Right ventricle myocardium superior (tissue), 1 donor: ENCODE measurements at regions of chr12 and their contacts with region 1.

Region 1: DNA sequence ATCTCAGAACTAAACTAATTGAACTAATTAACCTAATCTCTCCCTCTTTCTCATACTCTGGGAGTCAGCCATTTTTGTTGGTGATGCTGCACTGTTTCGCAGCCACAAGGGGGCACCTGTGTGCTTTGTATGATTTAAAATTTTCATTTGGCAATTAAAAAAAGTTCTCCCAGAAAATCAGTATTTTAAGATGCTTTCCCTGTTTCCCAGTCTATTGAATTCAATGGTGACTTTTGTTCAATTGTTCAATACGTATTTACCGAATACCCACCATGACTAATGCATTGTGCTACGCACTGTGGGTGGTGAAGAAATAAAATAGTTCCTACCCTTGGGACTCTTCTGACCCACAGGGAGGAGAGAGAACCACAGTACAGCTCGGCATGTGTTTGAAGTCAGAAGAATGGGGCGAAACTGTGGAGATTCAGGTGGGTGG is 63.7 kb downstream of the ZNF664 start:
- DNase-seq: no peak
- ATAC-seq: peak; percentile 61

Region 2: GRCh38 chr12:124073304-124074035 is 36.8 kb after region 1 on chr12:
- intact Hi-C with region 1: no loop called
- DNase-seq: no peak
- ATAC-seq: no peak

Region 3: GRCh38 chr12:124321040-124321481 is 284.4 kb after region 1 on chr12:
- intact Hi-C with region 1: loop called (anchors 5 kb)
- DNase-seq: peak; percentile 79
- ATAC-seq: peak; percentile 84

Region 4: DNA sequence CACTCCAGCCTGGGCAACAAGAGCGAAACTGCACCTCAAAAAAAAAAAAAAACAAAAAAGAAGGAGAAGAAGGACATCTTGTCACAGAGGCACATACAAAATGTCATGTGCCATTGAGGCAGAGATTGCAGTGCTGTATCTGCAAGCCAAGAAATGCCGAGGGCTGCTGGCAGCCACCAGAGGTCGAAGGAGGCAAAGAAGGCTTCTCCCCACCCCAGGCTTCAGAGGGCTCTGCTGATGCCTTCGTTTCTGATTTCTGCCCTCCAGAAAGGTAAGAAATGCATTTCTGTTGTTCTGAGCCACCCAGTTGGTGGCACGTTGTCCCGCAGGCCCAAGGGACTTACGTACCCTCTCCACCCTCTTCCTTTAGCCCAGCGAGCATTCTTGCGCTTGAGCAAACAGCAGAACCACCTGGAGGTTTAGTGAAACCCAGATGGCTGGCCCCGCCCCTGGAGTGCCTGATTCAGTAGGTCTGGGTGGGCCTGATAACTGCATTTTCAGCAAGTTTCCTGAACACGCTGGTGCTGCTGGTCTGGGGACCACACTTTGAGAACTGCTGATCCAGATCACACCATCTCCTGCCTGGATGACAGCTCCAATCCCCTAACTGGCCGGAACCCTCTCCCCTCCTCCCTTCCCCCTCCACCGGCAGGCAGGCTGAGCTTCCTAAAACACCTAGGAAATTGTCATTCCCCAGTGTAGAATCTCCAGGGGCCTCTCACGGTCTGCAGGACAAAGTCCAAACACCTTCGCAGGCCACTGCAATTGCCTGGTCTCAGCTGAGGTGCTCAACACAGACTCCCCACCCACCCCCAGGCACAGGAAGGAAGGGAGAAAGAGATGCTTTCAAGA is 848.1 kb after region 1 on chr12:
- intact Hi-C with region 1: loop called (anchors 10 kb)
- DNase-seq: no peak
- ATAC-seq: peak; percentile 46